Heart right ventricle (tissue), 16 donors: ENCODE measurements at regions of chr6 and their contacts with region 1.

Region 1: GRCh38 chr6:160015778-160016684 is 47.1 kb downstream of the IGF2R start:
- DNase-seq: no peak
- ATAC-seq: no peak
- H3K4me3 ChIP-seq: no peak overlapping the region
- H3K27ac ChIP-seq: peak overlapping the region in 1 of 10 donors; percentile 7
- H3K4me1 ChIP-seq: peaks cover 0 to 27% (median 15%) of the 10 kb centered on the region in 9 donors
- H3K27me3 ChIP-seq: no peaks in the 10 kb centered on the region
- CTCF ChIP-seq: no peak

Region 2: DNA sequence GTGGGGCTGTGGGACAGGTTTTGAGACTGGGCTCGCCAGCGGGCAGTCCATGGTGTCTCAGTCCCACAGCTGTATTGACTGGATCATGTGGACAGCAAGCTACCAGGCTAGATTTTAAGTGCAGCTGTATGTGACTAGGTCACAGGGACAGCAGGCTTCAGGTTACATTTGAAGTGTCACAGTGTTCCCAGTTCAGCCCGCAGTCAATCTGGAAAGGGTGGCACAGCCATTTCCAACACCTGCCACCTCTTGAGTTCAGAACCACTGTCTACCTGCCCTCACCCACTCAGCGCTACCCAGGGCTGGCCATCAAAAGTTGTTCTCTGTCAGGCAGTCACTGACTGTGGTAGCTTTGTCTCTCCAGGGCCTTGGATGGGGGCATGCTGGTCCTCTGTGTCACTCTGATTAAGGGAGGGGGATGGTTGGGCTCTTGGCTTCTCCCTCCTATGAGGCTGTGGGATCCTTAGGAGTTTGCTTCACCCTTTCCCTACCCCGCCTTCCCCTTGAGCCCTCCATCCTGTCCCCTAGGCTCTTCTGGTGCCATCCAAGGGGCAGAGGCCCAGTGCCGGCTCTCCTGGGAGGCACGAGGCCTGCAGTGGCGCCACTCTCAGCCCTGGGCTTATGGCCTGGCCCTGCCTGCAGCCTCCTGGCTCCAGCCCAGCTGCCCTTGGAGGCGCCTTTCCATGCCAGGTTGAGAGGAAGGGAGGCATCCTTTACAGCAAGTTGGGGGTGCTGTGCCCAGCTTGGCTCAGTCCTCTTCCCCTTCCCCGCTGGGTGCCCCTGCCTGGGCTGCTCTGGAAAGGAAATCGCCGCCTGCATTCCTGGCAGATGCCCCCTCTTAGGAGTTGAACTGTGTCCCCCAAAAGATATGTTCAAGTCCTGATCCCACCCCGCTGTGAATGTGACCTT is 171.0 kb before region 1 on chr6:
- intact Hi-C with region 1: no loop called
- DNase-seq: no peak
- ATAC-seq: peak in 1 of 8 donors; percentile 22
- H3K4me3 ChIP-seq: no peak overlapping the region
- H3K27ac ChIP-seq: no peak overlapping the region
- H3K4me1 ChIP-seq: no peaks in the 10 kb centered on the region
- H3K27me3 ChIP-seq: no peaks in the 10 kb centered on the region
- CTCF ChIP-seq: no peak

Region 3: DNA sequence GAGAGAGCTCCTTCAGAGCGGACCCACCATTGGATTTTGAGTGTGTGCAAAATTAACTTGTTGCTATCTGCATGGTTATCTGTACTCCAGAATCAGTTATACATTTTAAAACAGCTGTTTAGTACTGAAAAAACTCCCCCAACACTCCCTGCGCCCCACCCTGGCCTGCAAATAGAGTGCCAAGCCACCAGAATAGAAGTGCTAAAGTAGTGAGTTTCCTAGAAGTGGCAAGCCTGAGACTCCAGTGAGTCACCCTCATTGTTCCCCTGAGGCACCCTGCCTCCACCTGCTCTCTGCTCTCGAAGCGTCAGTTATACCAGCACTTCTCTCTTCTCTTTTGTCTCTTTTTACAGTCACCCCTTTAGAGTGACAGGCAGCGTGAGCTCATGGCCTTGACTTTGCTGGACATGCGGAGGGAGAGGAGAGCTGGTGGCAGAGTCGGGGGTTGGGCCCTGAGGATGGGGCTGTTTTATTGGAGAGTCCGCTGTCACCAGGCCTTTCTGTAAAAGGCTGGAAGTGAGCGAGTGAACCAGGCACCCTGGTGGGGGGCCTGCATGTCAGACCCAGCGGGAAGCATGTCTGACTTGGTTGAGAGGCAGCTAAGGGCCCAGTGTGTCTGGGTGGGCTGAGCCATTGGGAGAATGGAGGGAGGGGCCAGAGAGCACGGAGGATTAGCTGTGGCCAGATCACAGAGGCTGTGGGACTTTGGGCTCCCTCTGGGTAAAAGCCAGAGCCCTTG is 36.7 kb before region 1 on chr6:
- intact Hi-C with region 1: loop called in 2 of 10 experiments (anchors 5 to 10 kb)
- DNase-seq: peak in 1 of 2 donors; percentile 24
- ATAC-seq: peak in 6 of 8 donors; percentile 7 to 70 (median 40)
- H3K4me3 ChIP-seq: no peak overlapping the region
- H3K27ac ChIP-seq: peak overlapping the region in 9 of 10 donors; percentile 55 to 85 (median 72)
- H3K4me1 ChIP-seq: peaks cover 26 to 100% (median 84%) of the 10 kb centered on the region in 9 donors
- H3K27me3 ChIP-seq: no peaks in the 10 kb centered on the region
- CTCF ChIP-seq: no peak